ENCODE measurements at regions of chr9 and their contacts with region 1.

Region 1: DNA sequence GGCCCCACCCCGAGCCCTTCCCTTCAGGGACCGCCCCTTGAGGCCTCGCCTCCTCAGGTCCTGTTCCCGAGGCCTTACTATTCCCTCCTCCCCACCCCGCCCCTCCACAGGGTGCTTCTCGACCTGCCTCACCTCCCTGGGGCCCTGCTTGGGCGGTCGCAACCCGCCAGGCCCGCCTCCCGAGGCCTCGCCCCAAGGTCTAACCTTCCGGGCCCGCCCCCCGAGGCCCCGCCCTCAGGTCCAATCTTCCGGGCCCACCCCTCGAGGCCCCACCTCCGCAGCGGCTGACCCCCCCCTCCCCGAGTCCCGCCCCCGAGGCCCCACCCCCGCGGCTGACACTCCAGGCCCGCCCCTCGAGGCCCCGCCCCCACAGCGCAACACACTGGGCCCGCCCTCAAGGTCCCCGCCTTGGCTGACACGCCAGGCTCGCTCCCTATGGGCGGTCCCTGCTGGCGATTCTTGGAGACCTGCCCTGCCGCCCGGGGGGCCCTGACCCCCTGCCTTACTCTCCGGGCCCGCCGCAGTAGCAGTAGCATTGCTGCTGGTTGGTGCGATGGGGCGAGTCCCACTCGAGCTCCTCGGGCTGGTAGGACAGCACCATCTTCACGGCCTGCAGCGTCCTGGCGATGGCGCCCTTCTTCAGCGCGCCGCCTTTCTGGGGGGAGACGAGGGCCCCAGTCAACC is 8.2 kb downstream of the PHF19 start:
- DNase-seq: peak; percentile 95 to 99
- H3K4me3 ChIP-seq: peak overlapping the region; percentile 21
- CTCF ChIP-seq: no peak
- POLR2A ChIP-seq: no peak

Region 2: DNA sequence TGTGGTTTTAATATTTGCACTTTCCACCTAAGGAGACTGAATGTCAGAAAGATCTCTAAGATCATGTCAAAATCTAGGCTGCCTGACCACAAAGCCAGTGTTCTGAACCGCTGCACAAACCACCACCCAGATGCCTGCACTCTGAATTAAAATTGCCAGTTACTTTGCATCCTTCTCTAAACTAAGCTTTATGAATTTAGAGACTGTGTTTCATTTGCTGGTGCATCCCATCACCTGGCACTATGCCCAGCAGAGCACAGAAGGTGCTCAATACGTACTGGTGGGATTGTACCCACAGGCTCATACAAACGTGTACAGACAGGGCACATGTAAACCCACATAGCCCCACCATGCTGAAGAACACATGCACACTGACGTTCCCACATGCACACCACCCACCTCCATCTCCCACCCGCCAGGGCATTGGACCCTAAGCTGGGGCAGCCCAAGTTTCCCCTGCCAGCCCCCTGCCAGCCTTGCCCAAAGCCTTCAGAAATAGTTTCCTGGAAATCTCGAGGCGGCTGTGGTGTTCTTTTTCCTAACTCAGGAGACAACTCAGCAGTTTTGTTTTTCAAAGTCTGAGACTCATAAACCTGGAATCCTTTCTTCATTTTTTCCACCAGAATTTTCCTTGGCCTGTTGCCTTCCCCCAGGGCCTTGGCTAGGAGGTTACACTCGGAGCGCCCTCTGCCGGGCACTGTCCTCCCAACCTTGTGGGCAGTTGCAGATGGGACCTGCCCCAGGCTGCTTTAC is 67.4 kb after region 1 on chr9:
- intact Hi-C with region 1: loop called (anchors 5 kb)
- DNase-seq: peak; percentile 93 to 99
- H3K4me3 ChIP-seq: no peak overlapping the region
- CTCF ChIP-seq: peak in 1 of 3 donors; percentile 66
- POLR2A ChIP-seq: no peak

Region 3: GRCh38 chr9:121196389-121196788 is 327.6 kb after region 1 on chr9:
- intact Hi-C with region 1: no loop called
- DNase-seq: no peak
- H3K4me3 ChIP-seq: no peak overlapping the region
- CTCF ChIP-seq: no peak
- POLR2A ChIP-seq: no peak

Measured in lower leg skin (tissue), 4 donors.